ENCODE measurements at regions of chr15 and their contacts with region 1.

Region 1: DNA sequence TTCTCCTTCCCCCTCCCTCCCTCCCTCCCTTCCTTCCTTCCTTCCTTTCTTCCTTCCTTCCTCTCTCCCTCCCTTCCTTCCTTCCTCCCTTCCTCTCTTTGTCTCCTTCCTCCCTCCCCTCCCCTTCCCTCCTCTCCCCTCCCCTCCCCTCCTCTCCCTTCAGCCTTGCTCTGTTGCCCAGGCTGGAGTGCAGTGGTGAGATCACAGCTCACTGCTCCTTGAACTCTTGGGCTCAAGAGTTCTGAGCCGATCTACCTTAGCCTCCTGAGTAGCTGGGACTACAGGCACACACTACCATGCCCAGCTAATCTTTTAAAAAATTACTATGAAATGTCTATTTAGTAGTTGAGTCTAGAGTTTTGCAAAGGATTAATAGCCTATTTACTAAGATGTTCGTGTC is 32.2 kb downstream of the SQOR start:
- DNase-seq: no peak
- H3K4me3 ChIP-seq: no peak overlapping the region
- H3K27ac ChIP-seq: no peak overlapping the region
- H3K4me1 ChIP-seq: no peaks in the 10 kb centered on the region
- CTCF ChIP-seq: no peak

Region 2: DNA sequence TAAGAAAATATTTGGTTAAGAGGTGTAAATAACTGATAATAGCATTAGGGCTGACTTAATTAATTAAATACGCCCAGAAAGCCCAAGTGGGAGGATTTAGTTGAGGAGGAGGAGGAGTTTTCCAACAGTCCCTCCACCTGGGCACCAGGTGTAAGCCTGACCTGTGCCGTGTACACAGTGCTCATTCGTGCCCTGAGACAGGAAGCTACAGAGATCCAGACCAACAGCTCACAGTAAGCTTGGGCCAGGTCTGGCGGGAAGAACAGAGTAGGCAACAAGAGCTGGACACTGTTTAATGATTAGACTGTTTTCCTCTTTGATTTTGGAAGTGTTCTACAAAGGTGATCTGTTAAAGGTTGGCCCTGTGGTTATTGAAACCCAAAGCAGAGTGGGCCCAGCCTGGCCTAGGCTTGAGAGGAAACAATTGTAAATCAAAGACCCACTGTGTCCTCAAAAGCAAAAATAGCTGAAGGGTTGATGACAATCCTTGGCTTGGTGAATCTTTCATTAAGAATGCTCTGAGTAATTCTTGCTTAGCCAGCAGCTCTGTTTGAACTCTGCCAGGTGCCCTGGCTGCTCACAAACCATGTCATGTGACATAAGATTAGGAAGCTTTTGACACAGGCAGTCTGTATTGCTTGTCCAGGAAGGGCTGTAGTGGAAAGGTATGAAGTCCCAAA is 18.3 kb before region 1 on chr15:
- CTCF ChIA-PET with region 1: no interaction called
- POLR2A ChIA-PET with region 1: interaction called, 11 read pairs
- intact Hi-C with region 1: no loop called
- DNase-seq: no peak
- H3K4me3 ChIP-seq: no peak overlapping the region
- H3K27ac ChIP-seq: no peak overlapping the region
- H3K4me1 ChIP-seq: no peaks in the 10 kb centered on the region
- CTCF ChIP-seq: no peak

Measured in OCI-LY7 (cell line).